CD8-positive, alpha-beta T cell (primary cell): ENCODE measurements at regions of chr11 and their contacts with region 1.

Region 1: GRCh38 chr11:61429691-61430582 is at the starts of genes CPSF7 and SDHAF2:
- DNase-seq: peak; percentile 93 to 99 (median 98)
- ATAC-seq: peak; percentile 80
- H3K4me3 ChIP-seq: peak within 1 kb of the TSS; percentile 70 to 95
- H3K4me3 Mint-ChIP-seq: peak within 1 kb of the TSS; percentile 97
- H3K27ac ChIP-seq: peak within 1 kb of the TSS; percentile 98 to 100
- H3K27ac Mint-ChIP-seq: peak within 1 kb of the TSS; percentile 100
- H3K4me1 ChIP-seq: peaks cover 53% of the 10 kb centered on the region
- H3K4me1 Mint-ChIP-seq: peaks cover 72% of the 10 kb centered on the region
- H3K27me3 ChIP-seq: no peaks in the 10 kb centered on the region
- H3K27me3 Mint-ChIP-seq: no peaks in the 10 kb centered on the region
- CTCF ChIP-seq: no peak
- total RNA-seq, gene CPSF7: 106 to 111 TPM
- total RNA-seq, gene SDHAF2: 31.4 to 33.0 TPM

Region 2: GRCh38 chr11:61361686-61362541 is 68.0 kb before region 1 on chr11 and contains the starts of genes CYB561A3 and TMEM138:
- CTCF ChIA-PET with region 1: interaction called, 3 read pairs
- POLR2A ChIA-PET with region 1: interaction called, 23 read pairs
- intact Hi-C with region 1: loop called (anchors 1 kb)
- DNase-seq: peak; percentile 68 to 93 (median 87)
- ATAC-seq: peak; percentile 84
- H3K4me3 ChIP-seq: peak within 1 kb of the TSS; percentile 94 to 98
- H3K4me3 Mint-ChIP-seq: peak within 1 kb of the TSS; percentile 98
- H3K27ac ChIP-seq: peak within 1 kb of the TSS; percentile 87 to 98
- H3K27ac Mint-ChIP-seq: peak within 1 kb of the TSS; percentile 98
- H3K4me1 ChIP-seq: peaks cover 20% of the 10 kb centered on the region
- H3K4me1 Mint-ChIP-seq: peaks cover 37% of the 10 kb centered on the region
- H3K27me3 ChIP-seq: no peaks in the 10 kb centered on the region
- H3K27me3 Mint-ChIP-seq: no peaks in the 10 kb centered on the region
- CTCF ChIP-seq: no peak
- total RNA-seq, gene CYB561A3: 23.1 to 28.1 TPM
- total RNA-seq, gene TMEM138: 60.7 to 62.5 TPM

Region 3: DNA sequence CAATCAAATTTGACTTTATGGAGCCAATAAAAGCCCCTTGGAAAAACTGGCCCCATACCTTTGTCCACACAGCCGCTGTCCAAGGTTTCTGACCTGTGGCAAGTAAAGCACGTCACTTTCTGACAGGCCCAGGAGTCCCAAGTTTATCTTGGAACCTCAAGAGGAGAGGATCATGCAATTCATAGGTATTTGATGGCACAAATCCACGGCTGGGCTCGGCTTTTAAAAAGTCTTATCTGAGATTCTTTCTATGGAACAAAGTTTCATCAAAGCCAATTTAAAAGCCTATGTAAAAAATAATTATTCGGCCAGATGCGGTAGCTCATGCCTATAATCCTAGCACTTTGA is 54.2 kb before region 1 on chr11:
- CTCF ChIA-PET with region 1: no interaction called
- POLR2A ChIA-PET with region 1: no interaction called
- intact Hi-C with region 1: no loop called
- DNase-seq: no peak
- ATAC-seq: no peak
- H3K4me3 ChIP-seq: no peak overlapping the region
- H3K4me3 Mint-ChIP-seq: no peak overlapping the region
- H3K27ac ChIP-seq: no peak overlapping the region
- H3K27ac Mint-ChIP-seq: no peak overlapping the region
- H3K4me1 ChIP-seq: no peaks in the 10 kb centered on the region
- H3K4me1 Mint-ChIP-seq: no peaks in the 10 kb centered on the region
- H3K27me3 ChIP-seq: no peaks in the 10 kb centered on the region
- H3K27me3 Mint-ChIP-seq: no peaks in the 10 kb centered on the region
- CTCF ChIP-seq: no peak

Region 4: GRCh38 chr11:61417670-61418069 is 12.3 kb before region 1 on chr11:
- CTCF ChIA-PET with region 1: interaction called, 11 read pairs
- POLR2A ChIA-PET with region 1: interaction called, 4 read pairs
- intact Hi-C with region 1: no loop called
- DNase-seq: peak in 1 of 9 experiments; percentile 21
- ATAC-seq: no peak
- H3K4me3 ChIP-seq: no peak overlapping the region
- H3K4me3 Mint-ChIP-seq: no peak overlapping the region
- H3K27ac ChIP-seq: no peak overlapping the region
- H3K27ac Mint-ChIP-seq: peak overlapping the region; percentile 41
- H3K4me1 ChIP-seq: peaks cover 7% of the 10 kb centered on the region
- H3K4me1 Mint-ChIP-seq: peaks cover 51% of the 10 kb centered on the region
- H3K27me3 ChIP-seq: no peaks in the 10 kb centered on the region
- H3K27me3 Mint-ChIP-seq: no peaks in the 10 kb centered on the region
- CTCF ChIP-seq: no peak

Region 5: GRCh38 chr11:61460474-61460881 is 30.5 kb after region 1 on chr11:
- CTCF ChIA-PET with region 1: no interaction called
- POLR2A ChIA-PET with region 1: no interaction called
- intact Hi-C with region 1: no loop called
- DNase-seq: no peak
- ATAC-seq: no peak
- H3K4me3 ChIP-seq: no peak overlapping the region
- H3K4me3 Mint-ChIP-seq: no peak overlapping the region
- H3K27ac ChIP-seq: no peak overlapping the region
- H3K27ac Mint-ChIP-seq: no peak overlapping the region
- H3K4me1 ChIP-seq: no peaks in the 10 kb centered on the region
- H3K4me1 Mint-ChIP-seq: peaks cover 7% of the 10 kb centered on the region
- H3K27me3 ChIP-seq: no peaks in the 10 kb centered on the region
- H3K27me3 Mint-ChIP-seq: no peaks in the 10 kb centered on the region
- CTCF ChIP-seq: no peak

Region 6: GRCh38 chr11:61718621-61719302 is 288.8 kb after region 1 on chr11:
- CTCF ChIA-PET with region 1: no interaction called
- POLR2A ChIA-PET with region 1: no interaction called
- intact Hi-C with region 1: no loop called
- DNase-seq: no peak
- ATAC-seq: no peak
- H3K4me3 ChIP-seq: no peak overlapping the region
- H3K4me3 Mint-ChIP-seq: no peak overlapping the region
- H3K27ac ChIP-seq: no peak overlapping the region
- H3K27ac Mint-ChIP-seq: no peak overlapping the region
- H3K4me1 ChIP-seq: no peaks in the 10 kb centered on the region
- H3K4me1 Mint-ChIP-seq: no peaks in the 10 kb centered on the region
- H3K27me3 ChIP-seq: no peaks in the 10 kb centered on the region
- H3K27me3 Mint-ChIP-seq: no peaks in the 10 kb centered on the region
- CTCF ChIP-seq: no peak